GM10248 (cell line): ENCODE measurements at regions of chr9 and their contacts with region 1.

Region 1: DNA sequence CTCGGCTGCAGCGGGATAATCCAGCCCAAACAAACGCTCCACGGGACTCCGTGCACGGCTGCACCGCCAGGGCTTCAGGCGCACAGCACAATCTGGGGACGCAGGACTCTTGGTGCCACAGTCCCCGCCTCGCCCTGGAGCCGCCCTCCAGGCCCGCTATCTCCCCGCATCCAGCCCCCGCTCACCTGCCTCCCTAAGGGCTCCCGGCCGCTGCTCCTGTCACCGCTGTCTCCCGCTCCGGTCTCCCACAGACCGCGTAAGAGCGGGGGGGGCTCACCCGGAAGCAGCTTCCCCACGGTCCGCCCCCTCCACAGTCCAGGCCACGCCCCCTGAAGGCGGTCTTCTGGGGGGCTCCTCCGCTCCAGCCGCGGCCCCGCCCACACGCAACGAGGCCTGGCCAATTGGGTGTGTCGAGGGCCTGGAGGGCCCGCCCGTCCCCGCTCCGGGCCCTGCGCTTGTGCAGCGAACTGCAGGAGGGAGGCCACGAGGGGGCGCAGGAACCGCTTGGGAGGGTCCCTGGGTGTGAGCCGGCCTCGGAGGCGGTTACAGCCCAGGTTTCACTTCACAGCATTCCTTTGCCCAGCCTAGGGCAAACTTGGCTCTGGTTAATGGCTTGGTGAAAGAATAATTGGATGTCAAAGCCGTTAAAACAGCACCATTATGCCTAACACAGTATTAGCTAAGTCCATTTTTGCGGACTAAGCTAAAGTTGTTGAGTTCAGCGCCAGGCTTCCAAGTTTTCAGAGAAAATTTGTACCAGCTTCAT is at the start of gene ALAD:
- DNase-seq: peak; percentile 100
- CTCF ChIP-seq: peak; percentile 93

Region 2: DNA sequence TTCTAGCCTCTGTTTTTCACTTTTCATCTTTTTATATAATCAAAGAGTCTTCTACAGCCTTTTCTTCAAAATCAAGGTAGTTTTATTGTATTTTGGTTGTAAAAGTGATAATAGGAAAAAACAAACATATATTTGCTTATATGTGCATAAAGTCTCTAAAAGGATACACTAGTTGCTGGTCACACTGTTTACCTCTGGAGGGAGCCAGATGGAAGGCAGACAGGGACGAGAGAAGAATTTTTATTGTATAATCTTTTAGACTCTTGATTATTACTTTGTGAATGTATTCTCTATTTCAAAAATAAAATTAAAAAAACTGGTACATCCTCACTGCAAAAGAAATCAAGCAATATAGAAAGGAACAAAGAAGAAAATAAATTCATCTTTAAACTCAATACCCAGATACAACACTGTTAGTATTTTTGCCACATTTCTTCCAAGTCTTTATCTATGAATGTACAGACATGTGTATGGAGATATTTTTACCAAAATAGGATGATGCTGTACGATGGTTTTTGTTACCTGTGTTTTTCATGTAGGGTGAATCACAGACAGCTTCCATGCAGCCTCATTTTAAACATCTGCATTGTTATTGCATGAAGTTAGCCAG is 91.9 kb before region 1 on chr9:
- CTCF ChIA-PET with region 1: interaction called, 14 read pairs
- POLR2A ChIA-PET with region 1: no interaction called
- DNase-seq: peak; percentile 62
- CTCF ChIP-seq: peak; percentile 72

Region 3: GRCh38 chr9:113340017-113340699 is 61.1 kb before region 1 on chr9 and contains the start of gene WDR31:
- CTCF ChIA-PET with region 1: interaction called, 11 read pairs
- POLR2A ChIA-PET with region 1: no interaction called
- DNase-seq: peak; percentile 93
- CTCF ChIP-seq: peak; percentile 3

Region 4: GRCh38 chr9:113387560-113388230 is 13.5 kb before region 1 on chr9:
- CTCF ChIA-PET with region 1: interaction called, 24 read pairs
- POLR2A ChIA-PET with region 1: no interaction called
- DNase-seq: no peak
- CTCF ChIP-seq: no peak

Region 5: GRCh38 chr9:113501129-113501686 is 100.0 kb after region 1 on chr9:
- CTCF ChIA-PET with region 1: no interaction called
- POLR2A ChIA-PET with region 1: no interaction called
- DNase-seq: no peak
- CTCF ChIP-seq: no peak

Region 6: DNA sequence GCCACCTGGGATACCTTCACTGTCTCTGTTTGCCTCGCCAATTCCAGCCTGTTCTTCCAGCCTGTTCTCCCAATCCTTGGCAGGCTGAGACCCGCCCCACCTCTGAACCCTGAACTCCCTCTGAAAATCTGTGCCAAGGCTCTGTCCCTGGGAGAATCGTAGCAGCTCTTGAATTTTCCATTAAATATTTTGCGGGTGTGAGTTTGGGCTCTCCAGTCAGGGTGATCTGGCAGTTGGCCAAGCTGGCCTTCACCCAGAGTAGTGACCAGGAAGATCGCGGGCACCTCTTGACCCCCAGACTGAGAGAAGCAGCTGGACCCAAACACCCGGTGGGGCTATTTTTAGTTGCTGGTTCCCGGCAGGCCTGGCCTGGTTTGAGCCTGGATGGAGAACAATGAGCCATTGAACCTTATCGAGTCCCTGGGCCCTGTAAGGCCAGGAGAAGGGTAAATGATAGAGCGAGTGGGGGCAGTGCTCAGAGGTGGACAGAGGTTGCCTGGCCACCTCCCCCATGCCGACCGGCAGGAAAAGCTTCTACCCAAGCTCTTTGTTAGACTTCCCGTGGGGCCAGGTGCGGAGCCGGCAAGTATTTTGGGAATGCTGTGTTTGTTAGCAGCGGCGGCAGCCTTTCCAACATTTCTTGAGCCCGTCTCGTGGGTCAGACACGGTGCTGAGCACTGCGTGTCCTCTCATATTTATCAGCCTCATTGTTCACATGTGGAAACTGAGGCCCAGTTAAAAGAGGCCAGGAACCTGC is 208.5 kb after region 1 on chr9:
- CTCF ChIA-PET with region 1: no interaction called
- POLR2A ChIA-PET with region 1: no interaction called
- DNase-seq: no peak
- CTCF ChIP-seq: no peak